ENCODE measurements at regions of chr6 and their contacts with region 1.

Region 1: DNA sequence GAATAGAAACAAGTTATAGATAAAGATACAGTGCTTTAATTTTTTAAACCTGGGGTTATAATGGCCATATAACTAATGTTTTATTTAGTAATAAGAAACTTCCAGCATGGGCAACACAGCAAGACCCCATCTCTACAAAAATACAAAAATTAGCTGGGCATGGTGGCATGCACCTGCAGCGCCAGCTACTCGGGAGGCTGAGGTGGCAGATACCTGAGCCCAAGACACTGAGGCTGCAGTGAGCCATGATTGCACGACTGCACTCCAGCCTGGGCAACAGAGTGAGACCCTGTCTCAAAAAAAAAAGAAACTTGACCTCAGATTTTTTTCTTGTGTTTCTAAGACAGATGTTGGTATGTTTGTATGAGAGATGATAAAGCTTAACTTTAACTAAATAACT is 22.9 kb downstream of the EEF1A1 start:
- DNase-seq: no peak
- ATAC-seq: no peak
- H3K4me3 ChIP-seq: no peak overlapping the region
- H3K27ac ChIP-seq: no peak overlapping the region
- H3K4me1 ChIP-seq: no peaks in the 10 kb centered on the region
- CTCF ChIP-seq: no peak
- EP300 ChIP-seq: no peak
- POLR2A ChIP-seq: no peak
- RAD21 ChIP-seq: no peak

Region 2: DNA sequence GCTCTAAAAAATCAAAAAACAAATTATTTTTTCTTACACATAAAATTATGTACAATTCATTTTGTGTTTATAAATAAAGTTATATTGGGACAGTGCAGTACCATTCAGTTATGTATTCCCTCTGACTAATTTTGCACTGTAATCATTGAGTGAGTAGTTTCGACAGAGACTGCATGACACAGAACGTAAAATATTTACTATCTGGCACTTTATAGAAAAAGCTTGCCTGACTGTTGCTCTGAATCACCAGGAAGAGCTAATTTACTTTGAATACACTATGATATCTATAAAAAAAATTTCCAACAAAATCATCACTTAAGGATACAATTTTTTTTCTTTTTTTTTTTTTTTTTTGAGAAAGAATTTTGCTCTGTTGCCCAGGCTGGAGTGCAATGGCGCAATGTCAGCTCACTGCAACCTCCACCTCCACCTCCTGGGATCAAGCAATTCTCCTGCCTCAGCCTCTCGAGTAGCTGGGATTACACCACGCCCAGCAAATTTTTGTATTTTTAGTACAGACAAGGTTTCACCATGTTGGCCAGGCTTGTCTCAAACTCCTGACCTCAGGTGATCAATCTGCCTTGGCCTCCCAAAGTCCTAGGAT is 261.7 kb before region 1 on chr6:
- CTCF ChIA-PET with region 1: no interaction called
- POLR2A ChIA-PET with region 1: no interaction called
- DNase-seq: peak; percentile 21 to 72
- ATAC-seq: peak; percentile 92 to 98
- H3K4me3 ChIP-seq: no peak overlapping the region
- H3K27ac ChIP-seq: peak overlapping the region; percentile 66 to 88
- H3K4me1 ChIP-seq: peaks cover 29% of the 10 kb centered on the region
- CTCF ChIP-seq: no peak
- EP300 ChIP-seq: peak; percentile 31 to 48; a peak in 2 of 5 replicates
- POLR2A ChIP-seq: no peak
- RAD21 ChIP-seq: no peak

Region 3: GRCh38 chr6:73610444-73611275 is 112.7 kb after region 1 on chr6:
- CTCF ChIA-PET with region 1: interaction called, 10 read pairs
- POLR2A ChIA-PET with region 1: no interaction called
- DNase-seq: peak in 1 of 2 experiments; percentile 38
- ATAC-seq: peak in 1 of 2 experiments; percentile 73; a peak in 3 of 6 replicates
- H3K4me3 ChIP-seq: no peak overlapping the region
- H3K27ac ChIP-seq: peak overlapping the region; percentile 57 to 67; a peak in 5 of 6 replicates
- H3K4me1 ChIP-seq: 0 out of 3 replicates have a peak, but pooled peaks cover 14% of the 10 kb centered on the region
- CTCF ChIP-seq: peak; percentile 60
- EP300 ChIP-seq: no peak
- POLR2A ChIP-seq: no peak
- RAD21 ChIP-seq: peak; percentile 70 to 77

Region 4: DNA sequence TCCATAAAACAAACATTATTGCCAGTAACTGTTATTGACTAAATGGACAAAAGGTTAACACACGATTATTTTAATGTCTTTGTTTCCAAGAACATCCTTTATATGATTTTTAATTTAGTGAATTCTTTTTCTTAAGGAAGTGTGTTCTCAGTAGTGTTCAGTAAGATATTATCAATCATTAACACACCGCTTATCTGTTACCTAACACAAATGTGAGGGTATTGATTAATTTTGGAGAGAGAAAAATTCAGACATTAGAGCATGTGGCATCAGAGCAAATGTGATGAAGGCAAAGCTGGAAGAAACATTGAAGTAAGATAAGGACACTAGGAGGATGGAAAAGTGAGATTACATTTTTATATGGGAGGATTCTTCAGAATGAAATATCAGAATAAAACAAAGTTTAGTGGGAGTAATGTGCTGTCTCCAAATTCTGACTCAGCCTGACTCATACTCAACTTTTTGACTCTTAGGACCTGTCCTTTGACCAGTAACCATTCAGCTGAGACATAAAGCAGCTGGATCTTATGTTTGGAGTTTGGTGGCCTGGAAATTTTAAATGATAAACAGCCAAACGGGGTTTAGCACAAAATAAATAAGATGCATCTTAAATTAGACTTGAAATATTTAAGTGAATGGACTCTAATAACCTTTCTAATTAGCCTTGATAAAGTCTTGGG is 546.6 kb after region 1 on chr6:
- CTCF ChIA-PET with region 1: no interaction called
- POLR2A ChIA-PET with region 1: no interaction called
- DNase-seq: peak; percentile 4 to 8
- ATAC-seq: 0 out of 6 replicates have a peak, but pooled peaks of 1 of the 2 experiments have one; percentile 45
- H3K4me3 ChIP-seq: no peak overlapping the region
- H3K27ac ChIP-seq: no peak overlapping the region
- H3K4me1 ChIP-seq: peaks cover 10% of the 10 kb centered on the region; the same call in 2 of the 3 replicates
- CTCF ChIP-seq: no peak
- EP300 ChIP-seq: no peak
- POLR2A ChIP-seq: no peak
- RAD21 ChIP-seq: no peak